ENCODE measurements at regions of chr22 and their contacts with region 1.

Region 1: DNA sequence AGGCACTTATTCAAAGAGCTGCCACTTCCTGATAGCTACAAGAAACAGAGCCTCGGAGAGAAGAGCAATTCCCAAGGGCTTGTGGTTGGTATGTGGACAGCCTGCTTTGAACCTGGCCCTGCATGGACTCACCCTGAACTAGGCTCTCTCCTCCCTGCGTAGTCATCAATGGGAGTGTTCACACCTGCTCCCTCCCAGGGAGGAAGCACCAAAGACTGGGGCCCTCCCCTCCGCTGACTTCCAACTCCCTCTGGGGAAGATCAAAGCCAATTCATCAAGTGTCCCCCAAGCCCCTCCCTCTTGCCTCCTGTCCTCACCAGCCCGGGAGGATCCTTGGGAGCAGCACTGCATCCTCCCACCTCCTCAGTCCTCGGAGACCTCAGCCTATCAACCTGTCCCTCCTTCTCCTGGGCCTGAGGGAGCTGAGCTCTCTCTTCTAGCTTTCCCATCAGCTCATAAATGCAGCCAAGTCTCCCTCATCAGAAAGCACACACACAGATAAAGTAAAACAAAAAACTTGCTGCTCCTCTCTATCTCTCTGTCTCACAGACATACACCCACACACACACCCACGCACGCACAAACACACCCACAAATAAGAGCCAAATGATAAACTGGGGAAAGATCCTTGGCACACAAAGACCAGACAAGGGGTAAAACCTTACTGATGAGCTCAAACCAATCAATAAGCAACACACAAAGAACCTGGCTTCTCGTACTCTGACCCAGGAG is 3.3 kb downstream of the A4GALT start:
- DNase-seq: no peak
- ATAC-seq: peak in 4 of 8 donors; percentile 18 to 29 (median 20)
- H3K4me3 ChIP-seq: peak overlapping the region in 4 of 10 donors; percentile 25 to 99 (median 63)
- H3K27ac ChIP-seq: peak overlapping the region; percentile 15 to 99 (median 86)
- H3K4me1 ChIP-seq: peaks cover 22 to 80% (median 65%) of the 10 kb centered on the region in 9 donors
- H3K27me3 ChIP-seq: peaks cover 0 to 45% (median 0%) of the 10 kb centered on the region in 7 donors
- CTCF ChIP-seq: no peak

Region 2: GRCh38 chr22:42680648-42681047 is 36.7 kb before region 1 on chr22:
- intact Hi-C with region 1: loop called in 3 of 10 experiments (anchors 5 kb)
- DNase-seq: no peak
- ATAC-seq: peak in 3 of 8 donors; percentile 10 to 78 (median 40)
- H3K4me3 ChIP-seq: no peak overlapping the region
- H3K27ac ChIP-seq: peak overlapping the region in 6 of 10 donors; percentile 15 to 92 (median 52)
- H3K4me1 ChIP-seq: peaks cover 47 to 98% (median 91%) of the 10 kb centered on the region in 9 donors
- H3K27me3 ChIP-seq: no peaks in the 10 kb centered on the region
- CTCF ChIP-seq: no peak

Region 3: DNA sequence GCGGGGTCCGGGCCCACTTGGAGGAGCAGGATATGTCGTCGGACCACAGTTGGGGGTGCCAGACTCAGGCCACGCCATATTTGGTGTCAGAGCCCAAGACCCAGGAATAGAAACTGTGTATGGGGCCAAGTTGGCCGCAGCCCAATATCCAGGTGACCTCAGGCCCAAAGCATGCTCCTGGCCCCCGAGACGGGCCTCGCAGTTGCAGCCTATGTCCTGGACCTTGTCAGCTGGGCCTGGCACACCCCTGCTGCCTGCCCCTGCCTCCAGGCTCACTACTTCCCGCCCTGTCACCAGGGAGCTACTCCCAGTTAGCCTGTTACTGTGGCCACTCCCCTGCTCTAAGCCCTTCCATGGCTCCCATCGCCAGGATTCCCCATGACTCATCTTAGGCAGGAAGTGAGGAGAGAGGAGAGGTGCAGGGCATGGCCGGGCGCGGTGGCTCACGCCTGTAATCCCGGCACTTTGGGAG is 19.8 kb before region 1 on chr22:
- intact Hi-C with region 1: loop called in 1 of 10 experiments (anchors 2 kb)
- DNase-seq: peak; percentile 88 to 93
- ATAC-seq: peak; percentile 81 to 89 (median 88)
- H3K4me3 ChIP-seq: no peak overlapping the region
- H3K27ac ChIP-seq: peak overlapping the region; percentile 85 to 97 (median 94)
- H3K4me1 ChIP-seq: peaks cover 42 to 92% (median 75%) of the 10 kb centered on the region in 9 donors
- H3K27me3 ChIP-seq: no peaks in the 10 kb centered on the region
- CTCF ChIP-seq: no peak

Region 4: GRCh38 chr22:42743501-42743991 is 26.2 kb after region 1 on chr22:
- intact Hi-C with region 1: loop called in 1 of 10 experiments (anchors 2 kb)
- DNase-seq: peak; percentile 91 to 93
- ATAC-seq: peak; percentile 89 to 94 (median 92)
- H3K4me3 ChIP-seq: peak overlapping the region in 1 of 10 donors; percentile 10
- H3K27ac ChIP-seq: peak overlapping the region; percentile 67 to 96 (median 82)
- H3K4me1 ChIP-seq: peaks cover 13 to 49% (median 31%) of the 10 kb centered on the region in 9 donors
- H3K27me3 ChIP-seq: no peaks in the 10 kb centered on the region
- CTCF ChIP-seq: peak in 7 of 9 donors; percentile 3 to 42 (median 18)

Region 5: DNA sequence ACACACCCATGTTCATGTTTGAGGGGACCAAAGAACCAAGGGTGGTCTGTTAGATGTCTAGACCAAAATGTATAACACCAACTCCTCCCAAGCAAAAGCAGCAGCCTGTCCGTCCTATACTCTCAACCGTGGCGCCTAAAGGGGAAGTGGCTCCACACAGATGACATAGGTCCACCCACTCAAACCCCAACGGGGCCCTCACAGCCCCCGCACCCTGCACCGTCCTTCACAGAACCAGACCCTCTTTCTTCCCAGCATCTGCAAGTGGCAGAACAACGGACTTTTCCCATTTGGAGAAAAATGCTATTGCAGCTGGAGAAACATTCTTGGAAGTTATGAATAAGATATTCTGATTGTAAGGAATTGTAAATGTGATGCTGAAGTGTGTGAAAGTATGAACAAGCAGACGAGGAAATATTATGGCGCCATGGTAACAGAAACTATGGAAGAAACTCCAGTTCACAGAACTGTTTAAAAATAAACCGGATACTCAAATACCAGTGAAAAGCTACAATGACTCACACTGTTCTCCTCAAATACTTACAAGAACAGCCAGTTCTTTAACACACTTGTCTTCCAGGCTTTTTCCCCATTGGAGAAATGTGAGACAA is 216.2 kb after region 1 on chr22:
- intact Hi-C with region 1: no loop called
- DNase-seq: peak in 1 of 2 donors; percentile 69
- ATAC-seq: peak; percentile 38 to 76 (median 65)
- H3K4me3 ChIP-seq: peak overlapping the region in 6 of 10 donors; percentile 0 to 28 (median 13)
- H3K27ac ChIP-seq: peak overlapping the region; percentile 80 to 91 (median 86)
- H3K4me1 ChIP-seq: peaks cover 58 to 100% (median 100%) of the 10 kb centered on the region in 9 donors
- H3K27me3 ChIP-seq: no peaks in the 10 kb centered on the region
- CTCF ChIP-seq: no peak

Measured in heart right ventricle (tissue), 16 donors.